CD8-positive, alpha-beta memory T cell (primary cell): ENCODE measurements at regions of chr11 and their contacts with region 1.

Region 1: DNA sequence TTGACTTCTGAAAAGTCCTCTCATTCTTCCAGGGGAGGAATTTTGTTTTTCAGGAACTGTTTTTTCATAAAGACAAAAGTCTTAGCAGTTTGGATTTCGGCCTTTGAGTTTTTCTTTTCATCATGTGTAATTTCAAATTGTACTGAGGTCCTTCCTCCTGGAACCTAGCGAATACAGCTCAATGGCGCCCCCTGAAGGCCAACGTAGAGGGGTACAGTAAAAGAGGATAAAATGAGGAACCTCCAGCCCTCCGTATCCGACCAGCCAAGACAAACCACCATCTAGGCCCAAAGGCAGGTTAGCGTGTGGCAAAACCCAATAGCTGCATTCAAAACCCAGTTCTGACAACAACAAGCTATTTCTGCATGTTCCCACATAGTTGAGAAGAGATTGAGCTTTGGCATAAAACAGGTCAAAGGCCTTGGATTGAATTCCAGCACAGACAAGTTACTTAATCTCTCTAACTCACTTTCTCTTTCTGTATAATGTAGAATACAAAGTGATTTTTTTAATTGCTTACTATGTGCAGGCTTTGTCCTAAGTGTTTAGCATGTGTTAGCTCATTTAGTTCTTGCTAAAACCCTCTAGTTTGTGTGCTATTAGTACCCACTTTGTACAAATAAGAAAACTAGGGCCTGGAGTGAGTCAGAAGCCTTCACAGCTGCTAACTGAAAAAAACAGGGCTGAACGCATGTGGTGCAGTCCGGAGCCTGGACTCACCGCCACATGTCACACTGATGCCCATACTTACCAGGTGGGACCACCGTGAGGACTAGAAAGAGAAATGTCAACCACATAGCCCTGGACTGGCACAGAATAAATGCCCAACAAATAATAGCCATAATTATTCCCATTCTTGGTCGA is 43.2 kb upstream of the ETS1 start:
- DNase-seq: peak; percentile 82 to 92 (median 84)
- H3K4me3 ChIP-seq: peak overlapping the region; percentile 21
- H3K4me3 Mint-ChIP-seq: peak overlapping the region; percentile 1 to 81 (median 63)
- H3K27ac ChIP-seq: no peak overlapping the region
- H3K27ac Mint-ChIP-seq: peak overlapping the region; percentile 93 to 98 (median 95)
- H3K4me1 ChIP-seq: peaks cover 66% of the 10 kb centered on the region
- H3K4me1 Mint-ChIP-seq: peaks cover 66 to 68% (median 67%) of the 10 kb centered on the region in 3 donors
- H3K27me3 ChIP-seq: no peaks in the 10 kb centered on the region
- H3K27me3 Mint-ChIP-seq: no peaks in the 10 kb centered on the region

Region 2: GRCh38 chr11:128172046-128172878 is 458.3 kb before region 1 on chr11:
- CTCF ChIA-PET with region 1: interaction called, 160 read pairs
- POLR2A ChIA-PET with region 1: interaction called, 7 read pairs
- DNase-seq: peak; percentile 67 to 86 (median 76)
- H3K4me3 ChIP-seq: no peak overlapping the region
- H3K4me3 Mint-ChIP-seq: no peak overlapping the region
- H3K27ac ChIP-seq: no peak overlapping the region
- H3K27ac Mint-ChIP-seq: peak overlapping the region in 2 of 8 donors; percentile 57 to 90
- H3K4me1 ChIP-seq: no peaks in the 10 kb centered on the region
- H3K4me1 Mint-ChIP-seq: peaks cover 0 to 6% (median 3%) of the 10 kb centered on the region in 3 donors
- H3K27me3 ChIP-seq: no peaks in the 10 kb centered on the region
- H3K27me3 Mint-ChIP-seq: no peaks in the 10 kb centered on the region

Region 3: DNA sequence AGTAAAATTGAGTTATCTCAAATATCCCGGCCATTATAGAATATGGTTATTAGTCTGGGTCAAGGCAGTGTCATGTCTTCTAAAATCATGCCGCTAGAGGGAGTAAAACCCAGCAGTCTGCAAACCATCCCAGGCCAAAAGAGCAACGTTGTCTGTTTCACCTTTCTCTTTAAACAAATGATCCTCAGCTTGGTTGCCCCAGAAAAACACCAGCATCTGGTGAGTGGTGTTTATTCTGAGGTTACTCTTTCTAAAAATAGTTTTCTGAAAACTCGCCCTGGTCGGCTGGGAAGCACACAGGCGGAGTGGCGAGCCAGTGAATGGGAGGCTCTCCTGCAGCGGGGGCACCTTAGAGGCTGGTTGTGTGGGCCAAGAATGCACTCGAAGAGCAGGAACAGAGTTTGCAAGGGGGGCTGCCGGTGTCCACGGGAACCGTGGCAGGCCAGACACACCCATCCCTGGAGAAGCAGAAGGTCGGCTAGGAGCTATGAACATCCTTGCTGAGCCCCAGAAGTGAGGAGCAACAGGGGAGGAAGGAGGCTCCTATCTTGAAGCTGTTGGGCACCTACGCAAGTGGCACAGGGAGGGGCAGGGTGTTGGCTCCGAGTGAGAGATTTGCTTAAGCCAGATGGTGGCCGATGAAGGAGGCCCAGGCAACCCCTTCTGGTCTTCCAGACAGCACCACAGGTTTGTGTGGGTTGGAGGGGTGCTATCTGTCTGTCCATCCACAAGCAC is 340.3 kb before region 1 on chr11:
- CTCF ChIA-PET with region 1: interaction called, 94 read pairs
- POLR2A ChIA-PET with region 1: interaction called, 24 read pairs
- DNase-seq: peak; percentile 41 to 84 (median 80)
- H3K4me3 ChIP-seq: peak overlapping the region; percentile 58
- H3K4me3 Mint-ChIP-seq: peak overlapping the region; percentile 88 to 97 (median 93)
- H3K27ac ChIP-seq: peak overlapping the region; percentile 85
- H3K27ac Mint-ChIP-seq: peak overlapping the region; percentile 98 to 100 (median 99)
- H3K4me1 ChIP-seq: peaks cover 84% of the 10 kb centered on the region
- H3K4me1 Mint-ChIP-seq: peaks cover 89 to 99% (median 98%) of the 10 kb centered on the region in 3 donors
- H3K27me3 ChIP-seq: no peaks in the 10 kb centered on the region
- H3K27me3 Mint-ChIP-seq: no peaks in the 10 kb centered on the region

Region 4: DNA sequence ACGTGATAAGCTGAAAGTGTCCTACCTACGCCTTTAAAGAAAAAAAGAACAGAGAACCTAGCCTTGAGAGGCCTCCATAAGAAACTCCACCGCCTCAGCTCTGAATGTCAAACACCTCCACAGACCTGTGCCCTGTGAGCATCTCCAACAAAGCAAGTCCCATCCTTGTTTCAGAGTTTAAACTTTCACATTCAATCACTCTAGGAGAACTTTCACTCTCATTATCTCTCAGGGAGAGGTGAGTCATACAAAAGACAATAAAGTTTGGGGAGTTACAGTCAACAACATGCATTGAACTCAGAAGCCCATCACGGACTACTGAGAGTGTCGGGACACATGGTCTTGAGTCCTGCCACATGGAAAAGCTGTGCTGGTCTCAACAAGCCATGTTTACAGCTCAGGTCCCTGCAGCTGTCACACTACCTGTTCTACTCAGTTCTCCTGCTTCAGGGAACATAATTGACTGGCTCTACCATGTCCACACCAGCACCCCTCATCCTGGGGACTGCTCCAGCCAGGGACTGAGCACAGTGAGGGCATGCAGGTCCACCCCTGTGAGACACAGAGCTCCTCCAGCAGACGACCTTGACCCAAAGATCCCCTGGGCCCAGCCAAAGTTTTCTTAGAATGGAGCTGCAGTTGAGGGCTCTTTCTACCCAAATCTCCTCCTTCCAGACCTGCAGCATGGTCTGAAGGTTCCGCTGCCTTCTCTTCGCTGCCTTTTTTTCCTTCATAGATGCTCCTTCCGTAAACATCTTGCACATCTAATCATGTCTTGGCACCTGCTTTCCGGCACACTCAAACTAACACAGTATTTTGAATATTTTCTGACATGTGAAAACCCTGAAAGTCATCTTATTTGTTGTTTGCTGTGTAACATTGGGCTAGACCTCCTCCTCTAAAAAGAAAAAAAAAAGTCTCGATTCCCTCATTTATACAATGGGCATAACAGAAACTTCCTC is 158.2 kb before region 1 on chr11:
- CTCF ChIA-PET with region 1: interaction called, 11 read pairs
- POLR2A ChIA-PET with region 1: interaction called, 5 read pairs
- DNase-seq: peak in 3 of 5 donors; percentile 48 to 64 (median 63)
- H3K4me3 ChIP-seq: peak overlapping the region; percentile 69
- H3K4me3 Mint-ChIP-seq: peak overlapping the region; percentile 62 to 86 (median 77)
- H3K27ac ChIP-seq: peak overlapping the region; percentile 56
- H3K27ac Mint-ChIP-seq: peak overlapping the region; percentile 89 to 99 (median 96)
- H3K4me1 ChIP-seq: peaks cover 96% of the 10 kb centered on the region
- H3K4me1 Mint-ChIP-seq: peaks cover 99 to 100% (median 100%) of the 10 kb centered on the region in 3 donors
- H3K27me3 ChIP-seq: no peaks in the 10 kb centered on the region
- H3K27me3 Mint-ChIP-seq: peaks cover 0 to 1% of the 10 kb centered on the region in 2 donors

Region 5: GRCh38 chr11:128512474-128512996 is 118.1 kb before region 1 on chr11:
- CTCF ChIA-PET with region 1: interaction called, 82 read pairs
- POLR2A ChIA-PET with region 1: interaction called, 10 read pairs
- DNase-seq: peak in 3 of 5 donors; percentile 48 to 66 (median 62)
- H3K4me3 ChIP-seq: peak overlapping the region; percentile 97
- H3K4me3 Mint-ChIP-seq: peak overlapping the region; percentile 95 to 100 (median 98)
- H3K27ac ChIP-seq: peak overlapping the region; percentile 28
- H3K27ac Mint-ChIP-seq: peak overlapping the region; percentile 90 to 99 (median 98)
- H3K4me1 ChIP-seq: peaks cover 75% of the 10 kb centered on the region
- H3K4me1 Mint-ChIP-seq: peaks cover 91 to 95% (median 93%) of the 10 kb centered on the region in 3 donors
- H3K27me3 ChIP-seq: no peaks in the 10 kb centered on the region
- H3K27me3 Mint-ChIP-seq: no peaks in the 10 kb centered on the region

Region 6: GRCh38 chr11:128544471-128545051 is 86.0 kb before region 1 on chr11:
- CTCF ChIA-PET with region 1: interaction called, 12 read pairs
- POLR2A ChIA-PET with region 1: no interaction called
- DNase-seq: peak in 1 of 5 donors; percentile 54
- H3K4me3 ChIP-seq: peak overlapping the region; percentile 21
- H3K4me3 Mint-ChIP-seq: peak overlapping the region in 6 of 7 donors; percentile 6 to 65 (median 28)
- H3K27ac ChIP-seq: no peak overlapping the region
- H3K27ac Mint-ChIP-seq: peak overlapping the region in 3 of 8 donors; percentile 24 to 60 (median 58)
- H3K4me1 ChIP-seq: peaks cover 41% of the 10 kb centered on the region
- H3K4me1 Mint-ChIP-seq: peaks cover 22 to 68% (median 46%) of the 10 kb centered on the region in 3 donors
- H3K27me3 ChIP-seq: no peaks in the 10 kb centered on the region
- H3K27me3 Mint-ChIP-seq: no peaks in the 10 kb centered on the region

Region 7: DNA sequence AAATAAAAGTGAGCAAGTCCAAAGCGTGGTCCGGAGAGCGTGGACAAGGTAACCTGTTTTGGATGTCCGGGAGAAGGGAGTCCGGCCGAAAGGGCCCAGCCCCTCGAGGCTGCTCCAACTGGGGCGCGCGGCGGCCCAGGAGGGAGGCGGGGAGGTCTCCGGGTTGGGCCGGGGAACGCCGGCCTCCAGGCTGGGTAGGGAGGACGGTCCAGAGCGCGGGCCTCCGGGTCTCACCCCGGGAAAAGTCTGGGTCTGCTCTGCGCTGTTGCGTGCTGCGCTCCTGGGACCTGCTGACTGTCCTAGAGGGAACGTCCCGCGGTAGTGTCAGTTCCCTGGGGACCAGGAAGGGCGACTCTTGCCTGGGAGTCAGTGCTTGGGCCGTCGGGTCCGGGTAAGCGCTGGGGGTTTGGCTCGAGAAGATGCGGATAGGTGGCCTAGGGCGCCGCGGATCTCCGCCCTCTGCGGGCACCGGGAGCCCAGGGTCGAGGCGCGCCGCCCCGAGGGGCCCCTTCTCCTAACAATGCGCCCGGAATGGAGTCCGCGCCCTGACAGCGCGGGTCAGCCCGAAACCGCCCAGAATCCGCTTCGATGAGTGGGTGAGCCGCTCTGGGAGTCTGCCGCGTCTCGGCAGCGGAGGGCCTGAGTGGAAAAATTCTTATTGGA is 62.3 kb after region 1 on chr11:
- CTCF ChIA-PET with region 1: no interaction called
- POLR2A ChIA-PET with region 1: no interaction called
- DNase-seq: peak in 3 of 5 donors; percentile 28 to 64 (median 36)
- H3K4me3 ChIP-seq: peak overlapping the region; percentile 67
- H3K4me3 Mint-ChIP-seq: peak overlapping the region; percentile 91 to 98 (median 96)
- H3K27ac ChIP-seq: peak overlapping the region; percentile 82
- H3K27ac Mint-ChIP-seq: peak overlapping the region; percentile 91 to 97 (median 96)
- H3K4me1 ChIP-seq: peaks cover 26% of the 10 kb centered on the region
- H3K4me1 Mint-ChIP-seq: peaks cover 31 to 51% (median 39%) of the 10 kb centered on the region in 3 donors
- H3K27me3 ChIP-seq: no peaks in the 10 kb centered on the region
- H3K27me3 Mint-ChIP-seq: peaks cover 6 to 18% of the 10 kb centered on the region in 2 donors

Region 8: GRCh38 chr11:128713595-128713994 is 83.0 kb after region 1 on chr11:
- CTCF ChIA-PET with region 1: no interaction called
- POLR2A ChIA-PET with region 1: no interaction called
- DNase-seq: no peak
- H3K4me3 ChIP-seq: no peak overlapping the region
- H3K4me3 Mint-ChIP-seq: peak overlapping the region; percentile 1 to 64 (median 36)
- H3K27ac ChIP-seq: no peak overlapping the region
- H3K27ac Mint-ChIP-seq: peak overlapping the region; percentile 54 to 100 (median 96)
- H3K4me1 ChIP-seq: peaks cover 92% of the 10 kb centered on the region
- H3K4me1 Mint-ChIP-seq: peaks cover 96 to 100% (median 100%) of the 10 kb centered on the region in 3 donors
- H3K27me3 ChIP-seq: no peaks in the 10 kb centered on the region
- H3K27me3 Mint-ChIP-seq: no peaks in the 10 kb centered on the region

Region 9: GRCh38 chr11:128831174-128832120 is 200.8 kb after region 1 on chr11:
- CTCF ChIA-PET with region 1: interaction called, 44 read pairs
- POLR2A ChIA-PET with region 1: interaction called, 4 read pairs
- DNase-seq: peak; percentile 75 to 89 (median 80)
- H3K4me3 ChIP-seq: peak overlapping the region; percentile 4
- H3K4me3 Mint-ChIP-seq: peak overlapping the region; percentile 69 to 89 (median 72)
- H3K27ac ChIP-seq: peak overlapping the region; percentile 57
- H3K27ac Mint-ChIP-seq: peak overlapping the region; percentile 74 to 98 (median 92)
- H3K4me1 ChIP-seq: peaks cover 13% of the 10 kb centered on the region
- H3K4me1 Mint-ChIP-seq: peaks cover 21 to 39% (median 36%) of the 10 kb centered on the region in 3 donors
- H3K27me3 ChIP-seq: no peaks in the 10 kb centered on the region
- H3K27me3 Mint-ChIP-seq: no peaks in the 10 kb centered on the region